ENCODE measurements at regions of chr5 and their contacts with region 1.

Region 1: GRCh38 chr5:179678223-179679013 is 2.4 kb downstream of the CBY3 start:
- DNase-seq: peak; percentile 83 to 98 (median 89)
- ATAC-seq: peak; percentile 87 to 90 (median 88)
- H3K4me3 ChIP-seq: peak overlapping the region; percentile 77 to 99
- H3K4me3 Mint-ChIP-seq: peak overlapping the region; percentile 95 to 99 (median 98)
- H3K27ac ChIP-seq: peak overlapping the region; percentile 91
- H3K27ac Mint-ChIP-seq: peak overlapping the region; percentile 94 to 96
- H3K4me1 ChIP-seq: peaks cover 6 to 43% of the 10 kb centered on the region in 2 experiments
- H3K4me1 Mint-ChIP-seq: peaks cover 30 to 34% (median 31%) of the 10 kb centered on the region in 3 donors
- H3K27me3 ChIP-seq: peaks cover 0 to 3% of the 10 kb centered on the region in 2 experiments
- H3K27me3 Mint-ChIP-seq: no peaks in the 10 kb centered on the region

Region 2: GRCh38 chr5:179668391-179668790 is 10.0 kb before region 1 on chr5:
- CTCF ChIA-PET with region 1: interaction called in 1 of 2 experiments, 4 read pairs
- POLR2A ChIA-PET with region 1: interaction called in 1 of 2 experiments, 10 read pairs
- DNase-seq: peak in 32 of 35 experiments; percentile 0 to 65 (median 36)
- ATAC-seq: peak in 3 of 4 experiments; percentile 55 to 66 (median 61)
- H3K4me3 ChIP-seq: no peak overlapping the region
- H3K4me3 Mint-ChIP-seq: no peak overlapping the region
- H3K27ac ChIP-seq: no peak overlapping the region
- H3K27ac Mint-ChIP-seq: no peak overlapping the region
- H3K4me1 ChIP-seq: no peaks in the 10 kb centered on the region
- H3K4me1 Mint-ChIP-seq: no peaks in the 10 kb centered on the region
- H3K27me3 ChIP-seq: no peaks in the 10 kb centered on the region
- H3K27me3 Mint-ChIP-seq: no peaks in the 10 kb centered on the region

Region 3: DNA sequence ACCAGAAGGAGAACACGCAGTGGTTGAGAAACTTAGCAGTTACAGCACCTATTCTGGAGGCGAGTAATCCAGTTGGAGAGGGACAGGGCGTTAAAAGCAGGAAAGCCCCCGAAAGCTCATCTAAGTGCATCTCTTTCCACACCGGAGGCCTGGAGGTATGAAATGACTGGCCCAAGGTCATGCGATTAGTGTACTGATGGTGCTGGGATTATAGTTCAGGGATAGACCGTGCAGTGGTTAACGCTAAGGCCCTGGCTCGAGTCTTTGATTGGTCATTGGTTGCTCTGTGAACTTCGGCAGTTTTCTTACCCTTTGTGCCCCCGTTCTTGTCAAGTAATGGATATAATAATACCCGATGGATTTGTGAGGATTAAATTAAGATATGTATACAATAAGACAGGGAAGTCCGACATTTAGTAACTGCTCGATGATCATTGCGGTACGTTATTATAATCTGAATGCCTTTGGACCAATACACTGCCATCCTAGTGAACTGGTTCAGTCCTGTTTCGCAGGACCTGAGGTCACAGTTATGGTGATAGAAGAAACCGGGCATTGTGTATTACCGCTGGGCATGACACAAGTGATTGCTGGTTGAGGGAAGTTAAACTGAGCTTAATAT is 21.3 kb after region 1 on chr5:
- CTCF ChIA-PET with region 1: interaction called in 1 of 2 experiments, 6 read pairs
- POLR2A ChIA-PET with region 1: interaction called, 4 to 10 read pairs
- DNase-seq: peak in 4 of 35 experiments; percentile 6 to 48 (median 20)
- ATAC-seq: no peak
- H3K4me3 ChIP-seq: peak overlapping the region; percentile 83 to 90
- H3K4me3 Mint-ChIP-seq: peak overlapping the region; percentile 96 to 98 (median 98)
- H3K27ac ChIP-seq: peak overlapping the region; percentile 88
- H3K27ac Mint-ChIP-seq: peak overlapping the region; percentile 93 to 97
- H3K4me1 ChIP-seq: peaks cover 13 to 47% of the 10 kb centered on the region in 2 experiments
- H3K4me1 Mint-ChIP-seq: peaks cover 49 to 52% (median 52%) of the 10 kb centered on the region in 3 donors
- H3K27me3 ChIP-seq: no peaks in the 10 kb centered on the region
- H3K27me3 Mint-ChIP-seq: no peaks in the 10 kb centered on the region

Region 4: GRCh38 chr5:179763215-179763945 is 85.0 kb after region 1 on chr5:
- CTCF ChIA-PET with region 1: interaction called in 1 of 2 experiments, 11 read pairs
- POLR2A ChIA-PET with region 1: no interaction called
- DNase-seq: peak; percentile 4 to 76 (median 43)
- ATAC-seq: peak; percentile 56 to 71 (median 66)
- H3K4me3 ChIP-seq: no peak overlapping the region
- H3K4me3 Mint-ChIP-seq: peak overlapping the region in 1 of 3 donors; percentile 28
- H3K27ac ChIP-seq: no peak overlapping the region
- H3K27ac Mint-ChIP-seq: peak overlapping the region; percentile 27 to 87
- H3K4me1 ChIP-seq: peaks cover 11 to 30% of the 10 kb centered on the region in 2 experiments
- H3K4me1 Mint-ChIP-seq: peaks cover 54 to 69% (median 58%) of the 10 kb centered on the region in 3 donors
- H3K27me3 ChIP-seq: no peaks in the 10 kb centered on the region
- H3K27me3 Mint-ChIP-seq: no peaks in the 10 kb centered on the region

Region 5: DNA sequence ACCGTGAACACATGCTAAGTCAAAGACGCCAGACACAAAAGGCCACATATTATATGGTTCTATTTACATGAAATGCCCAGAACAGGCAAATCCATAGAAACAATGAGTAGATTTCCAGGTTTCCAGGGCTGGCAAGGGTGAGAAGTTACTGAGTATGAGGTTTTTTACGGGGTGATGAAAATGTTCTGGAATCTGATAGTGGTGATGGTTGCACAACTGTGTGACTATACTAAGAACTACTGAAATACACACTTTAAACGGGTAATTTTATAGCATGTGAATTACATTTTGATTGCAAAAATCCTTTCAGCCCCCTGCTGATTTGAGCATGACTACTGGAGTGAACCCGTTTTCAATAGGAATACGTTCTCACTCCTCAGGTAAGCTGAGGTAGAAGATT is 276.0 kb after region 1 on chr5:
- CTCF ChIA-PET with region 1: no interaction called
- POLR2A ChIA-PET with region 1: no interaction called
- DNase-seq: no peak
- ATAC-seq: no peak
- H3K4me3 ChIP-seq: no peak overlapping the region
- H3K4me3 Mint-ChIP-seq: no peak overlapping the region
- H3K27ac ChIP-seq: no peak overlapping the region
- H3K27ac Mint-ChIP-seq: no peak overlapping the region
- H3K4me1 ChIP-seq: no peaks in the 10 kb centered on the region
- H3K4me1 Mint-ChIP-seq: no peaks in the 10 kb centered on the region
- H3K27me3 ChIP-seq: no peaks in the 10 kb centered on the region
- H3K27me3 Mint-ChIP-seq: no peaks in the 10 kb centered on the region